Posterior vena cava (tissue), 2 donors: ENCODE measurements at regions of chr2 and their contacts with region 1.

Region 1: GRCh38 chr2:183024339-183025095 is 13.7 kb downstream of the NCKAP1 start:
- DNase-seq: no peak

Region 2: GRCh38 chr2:182280118-182280517 is 744.4 kb before region 1 on chr2:
- intact Hi-C with region 1: loop called in 1 of 2 experiments (anchors 5 kb)
- DNase-seq: no peak